Calu3 (cell line): ENCODE measurements at regions of chr15 and their contacts with region 1.

Region 1: GRCh38 chr15:69141286-69141701 is 19.1 kb upstream of the GLCE start:
- DNase-seq: peak; percentile 67
- H3K4me3 Mint-ChIP-seq: no peak overlapping the region
- H3K27ac Mint-ChIP-seq: no peak overlapping the region
- H3K4me1 Mint-ChIP-seq: peaks cover 18% of the 10 kb centered on the region
- H3K27me3 Mint-ChIP-seq: peaks cover 72% of the 10 kb centered on the region
- CTCF ChIP-seq: peak; percentile 43

Region 2: DNA sequence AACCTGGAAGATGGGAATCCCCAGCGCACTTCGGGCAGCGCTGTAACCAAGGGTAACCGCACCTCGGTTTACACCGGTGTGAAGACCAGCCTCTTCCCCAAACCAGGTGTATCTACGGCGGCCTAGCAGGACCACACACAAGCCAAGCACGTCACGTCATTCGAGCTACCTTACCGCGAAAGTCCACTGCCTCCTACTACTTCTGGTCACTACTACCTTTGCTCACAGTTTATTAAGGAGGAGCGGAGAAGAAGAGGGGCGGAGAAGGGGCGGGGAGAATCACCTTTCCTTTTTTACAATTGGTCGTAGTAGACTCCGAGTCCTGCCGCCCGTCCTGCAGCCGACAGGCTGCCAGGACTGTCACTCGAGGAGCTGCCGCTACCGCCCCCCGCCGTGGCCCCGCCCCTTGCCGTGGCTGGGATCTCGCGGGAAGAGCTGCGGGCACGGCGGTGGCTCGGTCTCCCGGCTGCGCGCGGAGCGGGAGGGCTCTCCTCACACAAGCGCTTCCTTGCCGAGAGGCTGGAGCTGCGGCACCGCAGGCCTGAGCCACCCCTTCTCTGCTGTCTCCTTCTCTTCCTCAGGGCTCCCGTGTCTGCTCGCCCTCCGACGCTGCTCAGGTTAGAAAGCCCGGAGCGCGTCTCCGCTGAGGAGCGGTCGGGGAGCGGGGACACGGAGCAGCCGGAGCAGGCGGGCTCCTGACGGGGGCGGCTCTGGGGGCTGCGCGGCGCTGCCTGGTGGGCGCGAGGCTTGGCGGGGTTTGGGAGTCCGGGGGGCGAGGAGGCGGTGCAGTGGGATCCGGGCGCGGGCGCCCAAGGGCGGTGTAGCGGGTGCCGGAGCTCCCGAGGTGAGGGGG is 19.1 kb after region 1 on chr15 and contains the start of gene GLCE:
- CTCF ChIA-PET with region 1: interaction called, 12 read pairs
- intact Hi-C with region 1: no loop called
- DNase-seq: peak; percentile 99
- H3K4me3 Mint-ChIP-seq: peak within 1 kb of the TSS; percentile 96
- H3K27ac Mint-ChIP-seq: peak within 1 kb of the TSS; percentile 89
- H3K4me1 Mint-ChIP-seq: peaks cover 29% of the 10 kb centered on the region
- H3K27me3 Mint-ChIP-seq: no peaks in the 10 kb centered on the region
- CTCF ChIP-seq: no peak
- total RNA-seq, gene GLCE: 20.4 and 22.4 TPM in 2 replicates